ENCODE measurements at regions of chr1 and their contacts with region 1.

Region 1: DNA sequence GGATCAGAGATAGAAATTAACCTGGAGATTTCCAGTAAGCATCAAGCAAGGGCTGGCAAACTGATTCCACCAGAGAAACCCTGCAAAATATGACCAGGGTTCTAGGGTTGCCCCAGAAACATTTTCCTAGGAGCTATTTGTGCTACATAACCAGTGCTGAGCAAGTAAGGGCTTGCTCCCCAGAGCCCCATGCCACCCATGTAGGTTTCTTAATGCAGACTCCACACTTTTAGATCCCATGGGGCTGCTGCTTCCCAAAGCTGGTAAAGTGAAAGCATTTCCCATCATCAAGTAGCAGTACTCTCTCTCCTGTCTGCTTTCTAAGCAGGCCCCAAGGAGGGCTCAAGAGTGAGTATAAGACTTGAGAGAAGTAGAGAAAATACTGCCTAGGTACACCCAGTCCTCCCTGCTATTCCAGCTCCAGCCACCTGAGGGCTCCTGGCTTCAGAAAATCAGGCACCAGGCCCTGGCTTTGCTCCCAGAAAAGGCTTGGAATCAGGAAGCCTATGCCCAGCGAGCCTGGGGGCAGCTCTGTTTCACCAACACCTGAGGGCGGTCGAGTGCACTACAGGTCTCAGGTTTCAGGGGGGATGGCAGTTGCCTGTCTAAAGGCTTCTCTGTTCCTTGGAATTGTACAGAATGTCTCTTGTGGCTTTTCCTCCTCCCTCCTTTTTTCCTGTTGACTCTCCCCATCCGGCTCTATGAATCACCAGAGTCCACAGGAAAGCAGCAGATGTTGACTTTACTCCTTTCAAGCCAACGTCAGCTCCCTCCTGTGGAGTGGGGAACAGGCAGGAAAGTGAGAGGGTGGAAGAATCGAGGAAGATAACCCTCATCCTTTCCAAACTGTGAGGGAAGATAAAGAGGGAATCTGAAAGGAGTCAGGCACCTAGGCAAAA is 6.2 kb upstream of the ANKRD35 start:
- DNase-seq: peak; percentile 97
- ATAC-seq: peak; percentile 98
- H3K4me3 ChIP-seq: peak overlapping the region in 1 of 2 experiments; percentile 25; a peak in 2 of 4 replicates
- H3K27ac ChIP-seq: peak overlapping the region; percentile 78
- H3K4me1 ChIP-seq: peaks cover 29 to 37% of the 10 kb centered on the region in 2 experiments
- H3K27me3 ChIP-seq: no peaks in the 10 kb centered on the region
- CTCF ChIP-seq: peak; percentile 96 to 99 (median 98)
- POLR2A ChIP-seq: no peak
- RAD21 ChIP-seq: peak; percentile 98

Region 2: DNA sequence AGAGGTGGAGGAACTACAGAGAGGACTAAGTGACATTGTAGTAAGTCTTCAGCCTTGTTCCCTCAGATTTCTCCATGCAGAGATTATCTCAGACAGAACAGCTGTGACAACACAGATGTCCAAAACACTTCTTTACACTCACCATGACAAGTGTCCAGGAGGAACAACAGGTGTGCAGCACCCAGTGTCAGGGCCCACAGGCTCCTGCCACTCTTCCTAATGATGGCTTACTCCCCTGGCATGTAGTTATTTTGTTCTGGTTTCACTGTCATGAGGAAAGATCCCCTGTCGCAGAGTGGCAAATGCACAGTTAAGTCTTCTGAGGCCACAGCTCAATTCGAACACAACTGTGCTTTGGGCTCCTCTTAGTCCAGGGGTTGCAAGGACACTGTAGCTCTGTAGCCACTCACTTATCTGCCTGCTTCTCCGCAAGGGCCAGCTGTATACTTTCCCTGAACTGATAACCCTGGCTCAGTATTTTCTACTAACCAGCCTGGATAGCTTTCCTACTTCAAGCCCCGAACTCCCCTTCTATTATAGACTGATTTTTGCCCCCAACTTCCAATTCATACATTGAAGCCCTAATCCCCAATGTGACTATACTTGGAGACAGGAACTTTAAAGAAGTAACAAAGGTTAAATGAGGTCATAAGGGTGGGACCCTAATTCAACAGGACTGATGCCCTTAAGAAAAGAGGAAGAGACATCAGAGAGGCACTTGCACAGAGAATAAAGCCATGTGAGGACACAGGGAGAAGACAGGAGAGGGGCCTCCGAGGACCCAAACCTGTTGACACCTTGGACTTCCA is 195.8 kb before region 1 on chr1:
- CTCF ChIA-PET with region 1: no interaction called
- POLR2A ChIA-PET with region 1: no interaction called
- RAD21 ChIA-PET with region 1: no interaction called
- intact Hi-C with region 1: no loop called
- DNase-seq: no peak
- ATAC-seq: no peak
- H3K4me3 ChIP-seq: no peak overlapping the region
- H3K27ac ChIP-seq: no peak overlapping the region
- H3K4me1 ChIP-seq: no peaks in the 10 kb centered on the region
- H3K27me3 ChIP-seq: no peaks in the 10 kb centered on the region
- CTCF ChIP-seq: no peak
- POLR2A ChIP-seq: no peak
- RAD21 ChIP-seq: no peak

Region 3: DNA sequence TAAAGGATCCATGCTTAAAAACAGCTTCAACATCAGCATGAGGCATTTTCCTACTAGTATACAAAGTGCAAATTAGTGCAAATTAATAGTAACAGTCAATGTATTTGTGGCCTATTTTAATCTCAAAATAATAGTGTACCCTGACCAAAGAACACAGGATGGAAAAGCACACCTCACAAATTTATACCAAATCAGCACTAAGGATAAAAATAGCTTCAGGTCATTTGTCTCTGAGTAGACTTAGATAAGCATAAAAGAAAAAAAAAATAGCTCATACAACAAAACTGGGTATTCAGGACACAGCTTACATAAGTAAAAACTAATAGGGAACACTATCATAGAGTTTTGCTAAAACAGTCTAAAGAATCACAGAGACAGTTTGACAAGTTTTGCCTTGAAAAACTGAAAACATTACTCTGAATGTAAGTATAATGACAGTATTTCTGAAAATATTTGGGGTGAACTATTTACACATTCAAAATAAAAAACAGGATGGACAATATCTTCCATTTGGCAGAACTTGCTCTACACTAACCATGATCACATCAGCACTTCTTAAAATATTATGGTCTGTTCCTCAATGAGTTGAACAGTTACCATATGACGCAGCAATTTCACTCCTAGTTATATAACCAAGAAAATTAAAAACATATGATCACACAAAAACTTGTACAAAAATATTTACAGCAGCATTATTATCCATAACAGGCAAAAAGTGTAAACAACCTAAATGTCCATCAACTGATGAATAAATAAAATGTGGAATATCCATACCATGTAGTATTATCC is 114.3 kb before region 1 on chr1:
- CTCF ChIA-PET with region 1: no interaction called
- POLR2A ChIA-PET with region 1: no interaction called
- RAD21 ChIA-PET with region 1: no interaction called
- intact Hi-C with region 1: no loop called
- DNase-seq: no peak
- ATAC-seq: no peak
- H3K4me3 ChIP-seq: no peak overlapping the region
- H3K27ac ChIP-seq: no peak overlapping the region
- H3K4me1 ChIP-seq: peaks cover 18 to 19% of the 10 kb centered on the region in 2 experiments
- H3K27me3 ChIP-seq: no peaks in the 10 kb centered on the region
- CTCF ChIP-seq: no peak
- POLR2A ChIP-seq: no peak
- RAD21 ChIP-seq: no peak

Region 4: DNA sequence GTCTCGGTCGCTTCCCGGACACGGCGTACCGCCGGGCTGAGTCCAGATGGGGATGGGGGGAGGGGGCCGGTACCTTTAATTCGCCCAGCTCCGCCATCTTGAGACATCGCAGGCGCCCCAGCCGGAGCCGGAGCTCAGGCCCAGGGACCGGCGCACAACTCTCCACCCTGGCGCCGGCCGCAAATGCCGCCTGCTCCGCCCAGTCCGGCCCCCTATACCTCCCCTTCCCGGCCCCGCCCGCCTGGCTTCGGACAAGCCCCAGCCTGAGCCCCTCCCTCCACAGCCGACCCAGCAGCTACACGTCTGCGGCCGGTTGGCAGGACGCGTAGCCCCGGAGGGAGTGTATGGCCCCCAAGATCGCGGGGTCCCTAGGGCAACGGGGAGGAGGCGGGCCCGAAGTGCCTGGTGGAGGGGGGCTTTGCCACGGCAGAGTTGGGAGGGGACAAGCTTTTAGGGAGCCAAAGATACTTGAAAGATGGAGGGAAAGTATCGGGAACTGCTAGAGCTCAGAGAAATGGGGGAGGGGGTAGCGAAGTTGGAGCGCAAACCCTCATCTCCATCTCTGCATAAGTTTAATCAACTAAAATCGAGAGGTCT is 32.8 kb before region 1 on chr1 and contains the start of gene PIAS3:
- CTCF ChIA-PET with region 1: interaction called, 36 read pairs
- POLR2A ChIA-PET with region 1: interaction called, 21 read pairs
- RAD21 ChIA-PET with region 1: interaction called, 3 read pairs
- intact Hi-C with region 1: no loop called
- DNase-seq: peak; percentile 82
- ATAC-seq: peak; percentile 87
- H3K4me3 ChIP-seq: peak within 1 kb of the TSS; percentile 73 to 75
- H3K27ac ChIP-seq: peak within 1 kb of the TSS; percentile 71
- H3K4me1 ChIP-seq: peaks cover 11 to 15% of the 10 kb centered on the region in 2 experiments; a peak in 3 of 4 replicates
- H3K27me3 ChIP-seq: no peaks in the 10 kb centered on the region
- CTCF ChIP-seq: no peak
- POLR2A ChIP-seq: peak; percentile 13
- RAD21 ChIP-seq: no peak
- total RNA-seq, gene PIAS3: 31.2 TPM

Region 5: DNA sequence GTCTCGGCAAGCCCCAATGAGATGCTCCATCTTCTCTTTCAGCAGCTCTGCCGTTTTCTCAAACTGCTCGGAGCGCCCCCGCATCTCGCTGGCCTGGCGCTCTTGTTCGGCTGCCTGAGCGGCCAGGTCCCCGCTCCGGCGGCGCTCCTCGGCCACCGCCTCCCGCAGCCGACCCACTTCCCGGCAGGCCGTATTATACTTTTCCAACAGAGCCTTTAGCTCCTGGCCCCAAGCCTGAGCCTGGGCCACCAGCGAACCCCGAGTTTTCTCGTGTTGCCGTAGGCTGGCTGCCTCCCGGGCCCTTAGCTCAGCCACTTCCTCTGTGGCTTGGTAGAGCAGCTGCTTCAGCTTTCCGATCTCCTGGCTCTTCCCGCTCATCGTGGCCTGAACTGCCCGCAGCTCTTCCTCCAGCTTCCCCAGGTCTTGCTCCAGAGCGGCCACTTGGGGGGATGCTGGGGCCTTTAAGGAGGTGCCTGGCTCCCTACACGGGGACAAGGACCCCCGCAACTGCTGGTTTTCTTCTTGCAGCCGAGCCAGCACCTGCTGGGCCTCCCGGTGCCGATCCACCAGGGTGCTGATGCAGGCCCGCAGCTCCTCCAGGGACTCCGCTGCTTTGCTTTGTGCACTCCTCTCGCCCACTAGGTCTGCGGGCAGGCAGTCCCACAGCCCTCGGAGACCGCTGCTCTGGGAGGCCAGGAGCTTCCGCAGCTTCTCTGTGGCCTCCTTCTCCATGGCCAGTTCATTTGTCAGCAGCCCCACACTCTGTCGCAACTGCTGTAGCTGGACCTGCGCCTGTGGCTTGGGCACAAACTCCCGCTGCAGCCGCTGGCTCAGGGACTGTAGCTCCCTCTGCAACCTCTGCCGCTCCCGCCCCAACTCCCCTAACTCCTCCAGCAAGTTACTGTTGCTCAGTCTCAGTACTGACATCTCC is 19.6 kb before region 1 on chr1:
- CTCF ChIA-PET with region 1: no interaction called
- POLR2A ChIA-PET with region 1: no interaction called
- RAD21 ChIA-PET with region 1: no interaction called
- intact Hi-C with region 1: no loop called
- DNase-seq: no peak
- ATAC-seq: no peak
- H3K4me3 ChIP-seq: no peak overlapping the region
- H3K27ac ChIP-seq: no peak overlapping the region
- H3K4me1 ChIP-seq: no peaks in the 10 kb centered on the region
- H3K27me3 ChIP-seq: no peaks in the 10 kb centered on the region
- CTCF ChIP-seq: no peak
- POLR2A ChIP-seq: no peak
- RAD21 ChIP-seq: no peak

Region 6: DNA sequence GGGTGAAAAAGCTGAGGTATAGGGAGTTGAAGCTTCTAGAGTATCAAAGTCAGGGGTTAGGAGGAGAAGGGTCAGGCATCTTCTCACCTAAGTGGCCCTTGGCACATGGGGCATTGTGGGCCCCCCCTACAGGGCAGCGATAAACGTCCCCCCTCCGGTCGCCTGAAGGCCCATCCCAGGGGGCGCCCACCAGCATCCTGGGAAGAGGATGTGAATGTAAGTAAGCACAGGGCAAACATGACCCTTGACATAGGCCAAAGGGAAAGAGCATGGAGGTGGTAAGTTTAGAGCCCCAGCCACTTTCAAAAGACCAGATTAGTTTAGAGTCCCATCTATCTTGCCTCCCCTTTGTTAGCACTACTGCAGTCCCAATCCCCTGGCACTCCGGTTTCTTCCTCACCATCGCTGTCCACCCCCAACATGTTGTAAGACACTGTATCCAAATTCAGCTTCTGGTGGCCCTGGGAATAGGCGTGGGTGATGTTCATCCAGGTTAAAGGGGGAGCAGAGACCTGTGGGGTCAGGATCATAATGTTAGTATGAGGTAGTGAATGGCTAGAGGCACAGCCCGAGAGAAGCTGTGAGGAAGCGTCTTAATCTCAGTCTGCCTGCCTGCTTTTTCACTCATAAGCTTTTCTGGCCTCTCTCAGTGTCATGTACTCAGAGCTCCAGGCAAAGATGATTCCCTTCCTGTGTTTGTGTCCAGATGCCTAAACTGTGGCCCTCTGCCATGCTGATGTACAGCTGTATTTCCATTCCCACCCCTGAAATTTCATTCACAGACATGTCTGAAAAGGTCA is 15.3 kb after region 1 on chr1:
- CTCF ChIA-PET with region 1: interaction called, 19 read pairs
- POLR2A ChIA-PET with region 1: interaction called, 3 read pairs
- RAD21 ChIA-PET with region 1: no interaction called
- intact Hi-C with region 1: loop called (anchors 1 kb)
- DNase-seq: no peak
- ATAC-seq: no peak
- H3K4me3 ChIP-seq: no peak overlapping the region
- H3K27ac ChIP-seq: no peak overlapping the region
- H3K4me1 ChIP-seq: peaks cover 5 to 14% of the 10 kb centered on the region in 2 experiments; a peak in 3 of 4 replicates
- H3K27me3 ChIP-seq: no peaks in the 10 kb centered on the region
- CTCF ChIP-seq: no peak
- POLR2A ChIP-seq: no peak
- RAD21 ChIP-seq: no peak

Region 7: GRCh38 chr1:145927063-145927886 is 35.4 kb after region 1 on chr1 and contains the start of gene RBM8A:
- CTCF ChIA-PET with region 1: interaction called, 9 read pairs
- POLR2A ChIA-PET with region 1: interaction called, 14 read pairs
- RAD21 ChIA-PET with region 1: interaction called, 4 to 5 read pairs
- intact Hi-C with region 1: no loop called
- DNase-seq: peak; percentile 98
- ATAC-seq: peak; percentile 97
- H3K4me3 ChIP-seq: peak within 1 kb of the TSS; percentile 86 to 88
- H3K27ac ChIP-seq: peak within 1 kb of the TSS; percentile 99
- H3K4me1 ChIP-seq: peaks cover 9 to 18% of the 10 kb centered on the region in 2 experiments; a peak in 3 of 4 replicates
- H3K27me3 ChIP-seq: no peaks in the 10 kb centered on the region
- CTCF ChIP-seq: peak; percentile 16 to 62 (median 59); a peak in 5 of 6 replicates
- POLR2A ChIP-seq: peak; percentile 87
- RAD21 ChIP-seq: 0 out of 2 replicates have a peak, but pooled peaks have one; percentile 3
- total RNA-seq, gene RBM8A: 195 TPM

Region 8: GRCh38 chr1:145949219-145949618 is 57.4 kb after region 1 on chr1:
- CTCF ChIA-PET with region 1: no interaction called
- POLR2A ChIA-PET with region 1: no interaction called
- RAD21 ChIA-PET with region 1: no interaction called
- intact Hi-C with region 1: no loop called
- DNase-seq: no peak
- ATAC-seq: no peak
- H3K4me3 ChIP-seq: no peak overlapping the region
- H3K27ac ChIP-seq: no peak overlapping the region
- H3K4me1 ChIP-seq: peaks cover 0 to 3% of the 10 kb centered on the region in 2 experiments; a peak in 1 of 4 replicates
- H3K27me3 ChIP-seq: no peaks in the 10 kb centered on the region
- CTCF ChIP-seq: no peak
- POLR2A ChIP-seq: no peak
- RAD21 ChIP-seq: no peak

Region 9: DNA sequence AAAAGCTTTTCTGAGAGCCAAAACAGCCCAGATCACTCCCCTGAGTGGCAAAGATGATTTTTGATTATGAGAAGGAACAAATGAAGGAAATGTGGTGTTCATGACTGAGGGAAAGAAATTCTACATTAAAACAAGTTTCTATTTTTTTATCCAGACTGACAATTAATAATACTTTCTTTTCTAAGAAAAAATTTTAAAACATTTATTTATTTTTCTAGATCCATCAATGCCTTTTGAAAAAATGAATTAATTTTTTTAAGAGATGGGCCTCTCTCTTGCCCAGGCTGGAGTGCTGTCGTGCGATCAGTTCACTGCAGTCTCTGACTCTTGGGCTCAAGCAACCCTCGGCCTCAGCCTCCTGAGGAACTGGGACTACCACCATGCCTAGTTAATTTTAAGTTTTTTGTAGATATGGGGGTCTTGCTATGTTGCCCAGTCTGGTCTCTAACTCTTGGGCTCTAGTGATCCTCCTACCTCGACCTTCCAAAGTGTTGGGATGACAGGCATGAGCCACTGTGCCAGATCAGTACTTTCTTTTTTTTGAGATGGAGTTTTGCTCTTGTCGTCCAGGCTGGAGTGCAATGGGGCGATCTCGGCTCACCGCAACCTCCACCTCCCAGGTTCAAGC is 115.8 kb after region 1 on chr1:
- CTCF ChIA-PET with region 1: interaction called, 13 read pairs
- POLR2A ChIA-PET with region 1: interaction called, 3 read pairs
- RAD21 ChIA-PET with region 1: interaction called in 1 of 2 experiments, 3 read pairs
- intact Hi-C with region 1: no loop called
- DNase-seq: no peak
- ATAC-seq: no peak
- H3K4me3 ChIP-seq: no peak overlapping the region
- H3K27ac ChIP-seq: no peak overlapping the region
- H3K4me1 ChIP-seq: peaks cover 0 to 6% of the 10 kb centered on the region in 2 experiments; a peak in 2 of 4 replicates
- H3K27me3 ChIP-seq: no peaks in the 10 kb centered on the region
- CTCF ChIP-seq: no peak
- POLR2A ChIP-seq: no peak
- RAD21 ChIP-seq: no peak

Region 10: GRCh38 chr1:146036965-146037646 is 145.3 kb after region 1 on chr1:
- CTCF ChIA-PET with region 1: interaction called, 10 read pairs
- POLR2A ChIA-PET with region 1: no interaction called
- RAD21 ChIA-PET with region 1: interaction called in 1 of 2 experiments, 4 read pairs
- intact Hi-C with region 1: no loop called
- DNase-seq: peak; percentile 75
- ATAC-seq: peak; percentile 39
- H3K4me3 ChIP-seq: peak overlapping the region; percentile 46 to 57
- H3K27ac ChIP-seq: peak overlapping the region; percentile 67
- H3K4me1 ChIP-seq: peaks cover 15 to 48% of the 10 kb centered on the region in 2 experiments
- H3K27me3 ChIP-seq: no peaks in the 10 kb centered on the region
- CTCF ChIP-seq: no peak
- POLR2A ChIP-seq: no peak
- RAD21 ChIP-seq: no peak

Measured in HCT116 (cell line).